ENCODE measurements at regions of chr7 and their contacts with region 1.

Region 1: DNA sequence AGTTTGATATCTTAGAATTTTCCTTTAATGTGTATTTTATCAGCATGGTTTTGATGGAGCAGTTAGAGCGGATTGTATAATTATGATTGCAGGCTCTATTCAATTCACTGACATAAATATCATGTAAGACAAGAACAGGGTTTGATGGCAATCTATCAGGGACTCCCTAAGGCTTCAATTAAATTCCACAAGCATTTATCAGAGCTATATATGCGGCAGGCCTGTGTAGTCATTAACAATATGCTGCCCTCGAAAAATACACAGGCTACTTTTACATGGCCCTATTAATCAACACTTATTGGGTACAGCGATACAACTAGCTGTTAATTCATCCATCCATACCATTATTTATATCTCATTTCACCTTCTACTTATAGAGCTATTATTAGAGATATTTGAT is 358.1 kb upstream of the TPK1 start:
- DNase-seq: no peak
- ATAC-seq: no peak
- H3K4me3 ChIP-seq: no peak overlapping the region
- H3K27ac ChIP-seq: no peak overlapping the region
- H3K4me1 ChIP-seq: no peaks in the 10 kb centered on the region
- H3K27me3 ChIP-seq: no peaks in the 10 kb centered on the region
- CTCF ChIP-seq: no peak
- EP300 ChIP-seq: no peak
- POLR2A ChIP-seq: no peak
- RAD21 ChIP-seq: no peak

Region 2: GRCh38 chr7:145219461-145219860 is 25.5 kb after region 1 on chr7:
- CTCF ChIA-PET with region 1: no interaction called
- POLR2A ChIA-PET with region 1: no interaction called
- in situ Hi-C with region 1: no loop called
- intact Hi-C with region 1: no loop called
- DNase-seq: no peak
- ATAC-seq: no peak
- H3K4me3 ChIP-seq: no peak overlapping the region
- H3K27ac ChIP-seq: no peak overlapping the region
- H3K4me1 ChIP-seq: no peaks in the 10 kb centered on the region
- H3K27me3 ChIP-seq: no peaks in the 10 kb centered on the region
- CTCF ChIP-seq: no peak
- EP300 ChIP-seq: no peak
- POLR2A ChIP-seq: no peak
- RAD21 ChIP-seq: no peak

Region 3: GRCh38 chr7:146864644-146865043 is 1670.7 kb after region 1 on chr7:
- CTCF ChIA-PET with region 1: no interaction called
- POLR2A ChIA-PET with region 1: no interaction called
- in situ Hi-C with region 1: no loop called
- intact Hi-C with region 1: loop called (anchors 5 kb)
- DNase-seq: no peak
- ATAC-seq: no peak
- H3K4me3 ChIP-seq: no peak overlapping the region
- H3K27ac ChIP-seq: no peak overlapping the region
- H3K4me1 ChIP-seq: no peaks in the 10 kb centered on the region
- H3K27me3 ChIP-seq: no peaks in the 10 kb centered on the region
- CTCF ChIP-seq: no peak
- EP300 ChIP-seq: no peak
- POLR2A ChIP-seq: no peak
- RAD21 ChIP-seq: no peak

Measured in K562 (cell line).